PC-3 (cell line): ENCODE measurements at regions of chr17 and their contacts with region 1.

Region 1: GRCh38 chr17:68613739-68614298 is 12.7 kb upstream of the FAM20A start:
- DNase-seq: peak; percentile 91
- ATAC-seq: peak; percentile 20; the same call in 1 of the 2 replicates
- H3K4me3 ChIP-seq: no peak overlapping the region
- H3K27ac ChIP-seq: no peak overlapping the region
- H3K4me1 ChIP-seq: peaks cover 26% of the 10 kb centered on the region
- H3K27me3 ChIP-seq: no peaks in the 10 kb centered on the region
- CTCF ChIP-seq: peak; percentile 93

Region 2: DNA sequence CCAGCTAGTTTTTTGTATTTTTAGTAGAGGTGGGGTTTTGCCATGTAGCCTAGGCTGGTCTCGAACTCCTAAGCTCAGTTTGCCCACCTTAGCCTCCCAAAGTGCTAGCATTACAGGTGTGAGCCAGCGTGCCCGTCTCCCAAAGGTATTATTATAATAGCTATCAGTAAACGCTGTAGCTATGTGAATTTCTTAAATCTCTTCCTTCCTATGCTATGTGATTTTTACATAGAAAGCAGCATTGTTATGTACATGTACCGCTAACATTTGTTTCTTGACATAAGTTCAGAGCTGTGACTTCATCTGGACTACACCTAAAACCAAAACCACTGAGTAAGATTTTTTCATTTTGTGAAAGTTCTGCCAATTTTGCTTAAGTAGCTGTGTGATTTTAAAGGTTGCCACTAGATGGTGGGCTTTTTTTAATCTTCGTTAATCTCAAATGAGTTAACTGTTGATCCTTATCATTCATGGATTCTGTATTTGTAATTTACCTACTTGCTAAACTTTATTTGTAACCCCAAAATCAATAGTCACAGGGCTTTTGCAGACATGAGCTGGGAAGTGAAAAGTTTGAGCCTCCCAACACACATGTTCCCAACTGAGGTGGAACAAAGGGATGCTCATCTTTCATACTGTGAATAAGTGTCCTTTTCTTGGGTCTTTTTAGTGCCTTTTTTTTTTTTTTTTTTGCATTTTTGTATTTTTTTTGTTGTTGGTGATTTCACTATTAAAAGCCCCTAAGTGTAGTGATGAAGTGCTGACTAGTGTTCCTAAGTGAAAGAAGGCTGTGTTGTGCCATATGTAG is 79.7 kb before region 1 on chr17:
- CTCF ChIA-PET with region 1: interaction called, 5 read pairs
- POLR2A ChIA-PET with region 1: no interaction called
- intact Hi-C with region 1: loop called (anchors 1 kb)
- DNase-seq: peak; percentile 72
- ATAC-seq: peak; percentile 44
- H3K4me3 ChIP-seq: no peak overlapping the region
- H3K27ac ChIP-seq: peak overlapping the region; percentile 88
- H3K4me1 ChIP-seq: peaks cover 22% of the 10 kb centered on the region
- H3K27me3 ChIP-seq: no peaks in the 10 kb centered on the region
- CTCF ChIP-seq: peak; percentile 90

Region 3: GRCh38 chr17:68599091-68599490 is 14.7 kb before region 1 on chr17:
- CTCF ChIA-PET with region 1: no interaction called
- POLR2A ChIA-PET with region 1: no interaction called
- intact Hi-C with region 1: loop called (anchors 1 kb)
- DNase-seq: peak; percentile 58
- ATAC-seq: peak; percentile 83
- H3K4me3 ChIP-seq: no peak overlapping the region
- H3K27ac ChIP-seq: peak overlapping the region; percentile 24
- H3K4me1 ChIP-seq: peaks cover 4% of the 10 kb centered on the region; the same call in 1 of the 2 replicates
- H3K27me3 ChIP-seq: peaks cover 22% of the 10 kb centered on the region
- CTCF ChIP-seq: no peak

Region 4: GRCh38 chr17:68646701-68647104 is 32.9 kb after region 1 on chr17:
- CTCF ChIA-PET with region 1: interaction called, 3 read pairs
- POLR2A ChIA-PET with region 1: no interaction called
- intact Hi-C with region 1: loop called (anchors 1 kb)
- DNase-seq: peak; percentile 88
- ATAC-seq: peak; percentile 81
- H3K4me3 ChIP-seq: no peak overlapping the region
- H3K27ac ChIP-seq: peak overlapping the region; percentile 67
- H3K4me1 ChIP-seq: peaks cover 23% of the 10 kb centered on the region
- H3K27me3 ChIP-seq: 0 out of 2 replicates have a peak, but pooled peaks cover 3% of the 10 kb centered on the region
- CTCF ChIP-seq: no peak